ENCODE measurements at regions of chr1 and their contacts with region 1.

Region 1: DNA sequence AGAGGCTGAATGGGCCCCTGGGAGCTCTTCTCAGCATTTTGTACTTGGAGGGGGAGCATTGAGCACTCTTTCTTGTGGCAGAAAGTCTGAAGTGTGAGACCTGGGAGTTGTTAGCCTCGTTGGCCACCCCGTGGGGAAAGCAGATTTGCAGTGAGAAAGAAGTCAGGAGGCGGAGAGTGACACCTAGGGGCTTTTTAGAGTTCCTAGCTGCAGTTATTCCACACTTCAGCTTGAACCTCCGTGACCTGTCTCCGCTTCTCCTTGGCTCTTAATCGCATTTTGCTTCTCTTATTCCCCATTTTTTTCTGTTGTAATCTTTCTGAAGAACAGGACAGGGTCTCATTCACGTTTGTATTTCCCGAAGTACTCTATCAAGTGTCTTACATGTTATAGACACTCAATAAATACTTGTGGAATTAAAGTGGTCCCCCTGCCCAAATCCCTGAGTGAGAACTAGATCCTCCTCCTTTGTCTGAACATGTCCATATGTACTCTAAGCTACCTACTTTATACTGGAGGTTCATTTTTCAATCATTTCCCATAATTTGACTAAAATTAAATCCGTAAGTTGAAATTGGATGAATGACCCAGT is 14.5 kb upstream of the C1orf141 start:
- DNase-seq: peak in 2 of 3 donors; percentile 67 to 79
- ATAC-seq: peak; percentile 99
- H3K4me3 ChIP-seq: no peak overlapping the region
- H3K4me1 ChIP-seq: peaks cover 9% of the 10 kb centered on the region
- CTCF ChIP-seq: peak; percentile 57

Region 2: GRCh38 chr1:66764994-66765578 is 384.2 kb before region 1 on chr1:
- intact Hi-C with region 1: loop called (anchors 10 kb)
- DNase-seq: peak in 1 of 3 donors; percentile 85
- ATAC-seq: peak; percentile 66
- H3K4me3 ChIP-seq: no peak overlapping the region
- H3K4me1 ChIP-seq: no peaks in the 10 kb centered on the region
- CTCF ChIP-seq: peak; percentile 16

Region 3: DNA sequence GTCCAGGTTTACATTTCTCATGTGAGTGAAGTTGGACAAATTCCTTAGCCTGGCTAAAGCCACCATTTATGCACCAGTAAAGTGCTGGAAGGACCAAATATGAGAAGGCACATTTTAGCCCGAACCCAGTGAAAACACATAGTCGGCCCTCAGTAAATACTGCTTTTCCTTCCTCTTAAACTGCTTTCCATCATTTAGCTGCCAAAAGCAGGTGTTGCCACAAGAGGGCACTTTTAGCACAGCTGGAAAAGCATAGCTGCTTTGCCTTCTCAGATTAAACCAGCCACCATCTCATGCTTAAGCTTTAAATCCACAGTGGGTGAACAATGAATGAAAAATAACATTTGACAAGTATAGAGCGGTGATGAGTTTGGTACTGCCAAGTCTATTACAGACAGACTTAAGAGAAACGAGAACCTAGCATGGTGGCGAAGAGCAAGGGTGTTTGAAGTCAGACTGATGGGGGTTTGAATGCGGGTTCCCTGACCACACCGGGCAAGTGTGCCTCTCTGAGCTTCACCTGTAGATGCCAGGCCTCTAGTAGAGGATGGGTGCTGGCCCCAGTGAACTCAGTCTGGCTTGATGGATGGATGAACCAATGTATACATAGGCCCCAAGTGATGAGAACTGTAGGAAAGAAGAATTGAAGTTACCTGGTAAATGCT is 153.1 kb before region 1 on chr1:
- intact Hi-C with region 1: loop called (anchors 5 to 10 kb)
- DNase-seq: peak in 2 of 3 donors; percentile 45 to 85
- ATAC-seq: peak; percentile 94
- H3K4me3 ChIP-seq: no peak overlapping the region
- H3K4me1 ChIP-seq: no peaks in the 10 kb centered on the region
- CTCF ChIP-seq: peak; percentile 49

Region 4: DNA sequence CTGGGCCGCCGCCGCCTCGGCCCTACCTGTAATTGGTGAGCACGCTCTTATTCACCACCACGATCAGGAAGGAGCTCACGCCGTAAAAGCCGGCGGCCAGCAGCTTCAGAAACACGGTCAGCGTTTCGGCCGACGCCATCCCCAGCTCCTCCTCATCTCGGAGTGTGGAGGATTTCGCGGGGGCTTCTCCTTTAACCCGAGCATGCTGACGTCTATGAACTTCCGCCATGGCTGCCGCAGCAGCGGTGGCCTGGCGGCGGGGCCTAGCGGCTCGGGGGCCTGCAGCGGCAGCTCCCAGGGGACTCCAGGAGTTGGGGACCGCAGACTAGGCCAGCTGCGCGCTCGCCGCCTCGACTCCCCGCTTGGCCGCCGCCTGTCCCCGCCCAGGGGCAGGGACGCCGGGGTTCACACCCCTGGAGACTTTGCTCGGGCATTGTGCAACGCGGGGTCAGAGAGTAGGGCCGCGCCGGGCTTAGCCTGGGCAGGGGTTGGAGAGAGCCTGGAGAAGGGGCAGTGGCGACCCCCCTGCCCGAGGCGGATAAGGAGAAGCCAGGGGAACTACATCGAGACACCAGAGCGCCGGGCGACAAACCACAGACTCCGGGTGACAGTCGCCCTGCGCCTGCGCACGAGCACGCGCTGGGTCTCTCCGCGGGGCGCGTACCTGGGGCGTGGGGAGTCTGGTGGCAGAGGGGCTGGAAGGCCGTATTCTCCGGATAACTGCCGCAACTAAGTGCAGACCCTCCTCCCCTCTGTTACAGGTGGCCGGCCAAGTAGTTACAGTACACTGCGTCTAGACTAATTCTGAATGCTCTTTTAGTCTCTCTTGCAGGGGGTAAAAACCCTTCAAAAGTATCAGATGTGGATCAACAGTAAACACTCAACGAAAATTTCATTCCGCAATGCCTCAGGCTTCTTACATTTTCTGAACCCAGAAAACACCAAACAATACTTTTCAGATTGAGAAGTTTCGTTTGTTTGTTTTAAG is 95.2 kb before region 1 on chr1 and contains the start of gene SLC35D1:
- intact Hi-C with region 1: loop called in 1 of 2 experiments (anchors 5 kb)
- DNase-seq: peak; percentile 86 to 90 (median 90)
- ATAC-seq: peak; percentile 91
- H3K4me3 ChIP-seq: peak within 1 kb of the TSS; percentile 60
- H3K4me1 ChIP-seq: peaks cover 15% of the 10 kb centered on the region
- CTCF ChIP-seq: no peak
- total RNA-seq, gene SLC35D1: 38.0 to 84.1 (median 67.9) TPM

Region 5: DNA sequence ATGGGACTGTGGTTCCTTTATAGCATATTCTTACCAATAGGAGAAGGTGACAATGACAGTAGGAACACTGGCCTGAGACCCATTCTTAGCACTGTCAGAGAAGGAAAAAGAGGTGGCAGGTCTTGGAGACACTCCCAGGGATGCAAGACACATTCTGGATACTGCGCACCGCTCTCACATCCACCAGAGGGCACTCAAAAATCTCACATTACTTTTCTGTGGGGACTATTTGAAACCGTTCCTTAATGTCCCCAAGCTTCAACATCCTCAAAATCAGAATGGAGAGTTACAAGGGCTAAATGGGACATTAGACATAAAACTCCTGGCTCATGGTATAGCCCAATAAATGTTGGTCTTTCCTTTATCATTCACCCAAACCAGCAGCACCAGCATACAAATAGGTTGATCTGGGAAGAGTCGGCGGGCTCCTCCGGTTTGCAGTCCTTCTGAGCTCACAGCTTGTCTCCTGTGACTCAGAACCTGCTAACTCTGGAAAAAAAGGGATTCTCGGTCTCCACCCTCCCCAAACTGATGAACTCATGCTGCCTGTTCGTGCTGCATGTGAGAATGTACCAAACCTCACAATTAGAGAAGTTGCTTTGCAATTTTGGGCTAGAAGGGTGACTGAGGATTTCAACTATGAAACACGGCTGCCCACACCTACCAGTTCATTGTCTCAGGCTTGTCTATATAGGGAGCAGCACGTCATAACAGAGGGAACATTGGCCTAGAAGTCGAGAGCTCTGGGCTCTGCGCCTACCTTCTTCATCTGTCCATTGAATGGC is 198.6 kb after region 1 on chr1:
- intact Hi-C with region 1: no loop called
- DNase-seq: peak in 2 of 3 donors; percentile 31 to 59
- ATAC-seq: peak; percentile 64
- H3K4me3 ChIP-seq: no peak overlapping the region
- H3K4me1 ChIP-seq: no peaks in the 10 kb centered on the region
- CTCF ChIP-seq: peak; percentile 29